ENCODE measurements at regions of chr5 and their contacts with region 1.

Region 1: GRCh38 chr5:108727651-108728565 is 19.8 kb upstream of the FER start:
- H3K4me3 Mint-ChIP-seq: peak overlapping the region; percentile 85
- H3K27ac Mint-ChIP-seq: peak overlapping the region; percentile 99
- H3K4me1 Mint-ChIP-seq: peaks cover 50% of the 10 kb centered on the region
- H3K27me3 Mint-ChIP-seq: no peaks in the 10 kb centered on the region

Region 2: GRCh38 chr5:108381954-108382783 is 345.7 kb before region 1 on chr5 and contains the start of gene FBXL17:
- intact Hi-C with region 1: loop called (anchors 10 kb)
- H3K4me3 Mint-ChIP-seq: peak within 1 kb of the TSS; percentile 80
- H3K27ac Mint-ChIP-seq: peak within 1 kb of the TSS; percentile 93
- H3K4me1 Mint-ChIP-seq: peaks cover 25% of the 10 kb centered on the region
- H3K27me3 Mint-ChIP-seq: peaks cover 7% of the 10 kb centered on the region

Region 3: GRCh38 chr5:108681079-108681921 is 46.6 kb before region 1 on chr5:
- intact Hi-C with region 1: loop called (anchors 5 kb)
- H3K4me3 Mint-ChIP-seq: no peak overlapping the region
- H3K27ac Mint-ChIP-seq: no peak overlapping the region
- H3K4me1 Mint-ChIP-seq: peaks cover 19% of the 10 kb centered on the region
- H3K27me3 Mint-ChIP-seq: no peaks in the 10 kb centered on the region

Region 4: DNA sequence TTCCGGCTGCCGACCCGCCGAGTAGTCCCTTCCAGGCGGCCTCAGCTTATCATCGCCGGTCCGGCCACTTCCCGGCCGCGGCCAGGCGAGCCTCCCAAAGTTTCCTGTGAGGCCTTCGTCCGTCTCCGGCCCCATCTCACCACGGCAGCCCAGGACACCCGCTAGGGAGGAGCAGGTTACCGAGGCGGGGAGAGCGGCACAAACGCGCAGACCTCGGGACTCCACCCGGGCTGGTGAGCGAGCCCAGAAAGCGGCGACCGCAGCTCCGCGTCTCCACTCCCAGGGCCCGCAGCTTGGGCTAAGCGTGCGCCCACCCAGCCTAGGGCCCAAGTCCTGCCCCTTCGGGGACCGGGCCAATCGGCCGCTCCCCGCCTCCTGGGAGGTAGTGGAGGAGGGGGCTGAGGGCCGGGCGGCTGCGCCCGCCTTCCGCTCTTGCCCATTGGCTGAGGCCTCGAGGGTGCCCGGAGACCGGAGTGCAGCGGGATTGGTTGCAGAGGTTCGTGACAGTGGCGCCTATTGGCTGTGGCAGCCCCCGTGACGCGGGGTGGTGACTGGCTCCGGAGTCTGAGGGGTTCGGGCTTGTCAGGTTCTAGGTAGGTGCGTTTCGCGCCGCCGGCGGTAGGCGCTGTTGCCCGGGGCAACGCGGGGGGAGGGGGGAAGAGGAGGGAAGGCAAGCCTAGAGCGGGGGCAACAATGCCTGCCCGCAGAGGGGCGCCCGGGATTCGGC is 20.7 kb after region 1 on chr5:
- intact Hi-C with region 1: loop called (anchors 1 kb)
- H3K4me3 Mint-ChIP-seq: peak overlapping the region; percentile 98
- H3K27ac Mint-ChIP-seq: peak overlapping the region; percentile 99
- H3K4me1 Mint-ChIP-seq: peaks cover 7% of the 10 kb centered on the region
- H3K27me3 Mint-ChIP-seq: peaks cover 3% of the 10 kb centered on the region

Region 5: GRCh38 chr5:108765647-108766046 is 37.7 kb after region 1 on chr5:
- intact Hi-C with region 1: no loop called
- H3K4me3 Mint-ChIP-seq: no peak overlapping the region
- H3K27ac Mint-ChIP-seq: no peak overlapping the region
- H3K4me1 Mint-ChIP-seq: peaks cover 29% of the 10 kb centered on the region
- H3K27me3 Mint-ChIP-seq: no peaks in the 10 kb centered on the region

Region 6: DNA sequence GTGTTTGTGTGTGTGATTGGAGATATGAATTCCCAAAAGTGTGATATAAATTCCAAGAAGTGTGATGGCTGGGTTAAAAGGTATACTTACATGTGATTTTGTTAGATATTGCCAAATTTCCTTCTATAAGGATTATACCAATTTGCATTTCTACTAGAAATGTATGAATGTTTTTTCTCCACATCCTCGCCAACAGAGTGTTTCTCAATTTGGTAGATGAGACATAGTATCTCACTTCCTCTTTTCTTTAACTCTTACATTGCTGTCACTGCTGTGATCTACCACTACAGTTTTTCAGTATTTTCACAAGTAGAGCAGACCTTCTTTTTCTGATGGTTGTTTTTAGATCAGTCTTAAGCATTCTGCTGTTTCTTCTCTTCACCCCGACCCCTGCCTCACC is 131.1 kb after region 1 on chr5:
- intact Hi-C with region 1: loop called (anchors 5 kb)
- H3K4me3 Mint-ChIP-seq: peak overlapping the region; percentile 48
- H3K27ac Mint-ChIP-seq: peak overlapping the region; percentile 66
- H3K4me1 Mint-ChIP-seq: peaks cover 18% of the 10 kb centered on the region
- H3K27me3 Mint-ChIP-seq: no peaks in the 10 kb centered on the region

Region 7: DNA sequence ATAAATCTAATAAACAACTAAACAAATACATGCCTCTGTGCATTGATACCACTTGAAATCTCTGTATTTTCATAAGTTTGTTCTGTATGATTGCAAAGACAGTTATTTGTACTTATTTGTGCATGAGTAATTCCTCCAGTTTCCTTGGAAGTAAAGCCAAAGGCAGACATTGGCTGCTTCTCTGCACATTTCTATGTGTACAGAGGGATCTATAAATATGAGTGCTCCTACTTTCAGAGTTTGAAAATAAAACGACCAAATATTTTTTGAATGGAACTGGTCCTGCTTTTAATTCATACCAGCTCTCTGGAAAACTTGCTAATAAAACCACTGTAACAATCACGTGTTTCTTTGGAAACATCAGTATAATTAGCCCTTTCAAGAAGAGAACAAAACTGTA is 1268.3 kb after region 1 on chr5:
- intact Hi-C with region 1: loop called (anchors 5 kb)
- H3K4me3 Mint-ChIP-seq: no peak overlapping the region
- H3K27ac Mint-ChIP-seq: no peak overlapping the region
- H3K4me1 Mint-ChIP-seq: peaks cover 14% of the 10 kb centered on the region
- H3K27me3 Mint-ChIP-seq: no peaks in the 10 kb centered on the region